Activated CD8-positive, alpha-beta T cell treated with anti-CD3 and anti-CD28 coated beads, Interleukin-2, amount 10 ng/mL, durations not matched to agents 7 days and 5 days (primary cell): ENCODE measurements at regions of chr5 and their contacts with region 1.

Region 1: DNA sequence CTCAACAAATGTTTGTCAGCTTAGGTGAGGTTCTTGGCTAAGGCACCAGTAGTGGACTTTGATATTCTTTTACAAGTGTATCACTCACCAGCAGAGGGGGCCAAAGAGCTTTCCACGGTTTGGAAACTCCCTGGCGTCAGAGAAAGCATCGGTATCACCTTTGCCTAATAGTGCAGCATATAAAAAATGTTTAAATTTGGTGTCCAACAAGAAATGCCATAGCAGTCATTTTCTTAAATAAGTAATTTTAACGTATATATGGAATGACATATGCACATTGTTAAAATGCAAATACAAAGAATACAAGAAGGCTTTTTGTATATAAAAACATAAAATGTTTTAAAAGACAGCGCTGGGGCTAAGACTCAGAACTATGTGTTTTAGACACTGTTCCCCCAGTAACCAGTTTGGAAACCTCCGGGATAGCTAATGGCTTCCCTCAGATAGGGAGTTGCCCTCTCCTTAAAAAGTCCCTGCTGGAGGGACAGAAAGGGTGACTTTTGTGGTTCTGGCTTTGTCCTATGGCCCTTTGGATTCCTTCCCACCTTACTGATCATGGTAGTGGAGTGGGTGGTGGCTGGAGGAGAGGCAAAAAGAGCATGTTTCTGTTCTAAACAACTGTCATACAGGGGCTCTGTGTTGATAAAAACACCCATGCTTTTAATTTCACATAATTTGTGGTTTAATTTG is 124.6 kb downstream of the GPBP1 start:
- DNase-seq: peak; percentile 91
- ATAC-seq: peak; percentile 88
- H3K4me3 Mint-ChIP-seq: peak overlapping the region; percentile 56
- H3K27ac Mint-ChIP-seq: no peak overlapping the region
- H3K4me1 Mint-ChIP-seq: peaks cover 13% of the 10 kb centered on the region
- H3K27me3 Mint-ChIP-seq: peaks cover 4% of the 10 kb centered on the region

Region 2: DNA sequence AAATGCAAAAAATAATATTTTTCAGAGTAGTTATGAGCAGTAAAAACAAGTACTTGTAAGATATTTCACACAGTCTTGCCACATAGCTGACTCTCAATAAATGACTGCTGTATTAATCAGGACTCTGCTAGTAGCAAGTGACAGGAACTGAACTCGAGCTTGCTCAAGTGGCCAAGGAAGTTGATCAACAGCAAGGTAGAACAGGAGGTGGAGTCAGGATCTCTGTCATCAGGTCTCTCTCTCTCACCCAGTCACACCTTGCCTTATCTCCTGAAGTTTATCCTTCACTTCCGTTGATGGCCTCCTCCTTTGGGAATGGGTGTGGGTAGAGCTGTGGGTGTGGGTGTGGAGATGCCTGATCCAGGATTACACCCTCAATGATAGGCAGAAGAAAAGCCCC is 17.6 kb before region 1 on chr5:
- CTCF ChIA-PET with region 1: interaction called, 19 read pairs
- POLR2A ChIA-PET with region 1: no interaction called
- DNase-seq: no peak
- ATAC-seq: no peak
- H3K4me3 Mint-ChIP-seq: no peak overlapping the region
- H3K27ac Mint-ChIP-seq: no peak overlapping the region
- H3K4me1 Mint-ChIP-seq: no peaks in the 10 kb centered on the region
- H3K27me3 Mint-ChIP-seq: peaks cover 5% of the 10 kb centered on the region

Region 3: GRCh38 chr5:57499262-57500050 is 201.0 kb after region 1 on chr5:
- CTCF ChIA-PET with region 1: interaction called, 12 read pairs
- POLR2A ChIA-PET with region 1: no interaction called
- DNase-seq: peak; percentile 26
- ATAC-seq: peak; percentile 70
- H3K4me3 Mint-ChIP-seq: peak overlapping the region; percentile 54
- H3K27ac Mint-ChIP-seq: no peak overlapping the region
- H3K4me1 Mint-ChIP-seq: peaks cover 33% of the 10 kb centered on the region
- H3K27me3 Mint-ChIP-seq: peaks cover 14% of the 10 kb centered on the region

Region 4: GRCh38 chr5:57513785-57514184 is 215.3 kb after region 1 on chr5:
- CTCF ChIA-PET with region 1: no interaction called
- POLR2A ChIA-PET with region 1: no interaction called
- DNase-seq: no peak
- ATAC-seq: no peak
- H3K4me3 Mint-ChIP-seq: no peak overlapping the region
- H3K27ac Mint-ChIP-seq: no peak overlapping the region
- H3K4me1 Mint-ChIP-seq: no peaks in the 10 kb centered on the region
- H3K27me3 Mint-ChIP-seq: peaks cover 17% of the 10 kb centered on the region

Region 5: GRCh38 chr5:57561231-57561842 is 262.9 kb after region 1 on chr5:
- CTCF ChIA-PET with region 1: no interaction called
- POLR2A ChIA-PET with region 1: no interaction called
- DNase-seq: no peak
- ATAC-seq: no peak
- H3K4me3 Mint-ChIP-seq: no peak overlapping the region
- H3K27ac Mint-ChIP-seq: no peak overlapping the region
- H3K4me1 Mint-ChIP-seq: no peaks in the 10 kb centered on the region
- H3K27me3 Mint-ChIP-seq: peaks cover 12% of the 10 kb centered on the region